ENCODE measurements at regions of chr19 and their contacts with region 1.

Region 1: GRCh38 chr19:35114353-35115176 is 1.1 kb upstream of the FXYD3 start:
- DNase-seq: no peak
- H3K4me3 ChIP-seq: peak overlapping the region; percentile 31 to 46
- H3K27ac ChIP-seq: peak overlapping the region; percentile 94
- H3K4me1 ChIP-seq: peaks cover 21% of the 10 kb centered on the region
- H3K27me3 ChIP-seq: no peaks in the 10 kb centered on the region
- CTCF ChIP-seq: peak; percentile 95 to 97 (median 95)
- POLR2A ChIP-seq: no peak

Region 2: DNA sequence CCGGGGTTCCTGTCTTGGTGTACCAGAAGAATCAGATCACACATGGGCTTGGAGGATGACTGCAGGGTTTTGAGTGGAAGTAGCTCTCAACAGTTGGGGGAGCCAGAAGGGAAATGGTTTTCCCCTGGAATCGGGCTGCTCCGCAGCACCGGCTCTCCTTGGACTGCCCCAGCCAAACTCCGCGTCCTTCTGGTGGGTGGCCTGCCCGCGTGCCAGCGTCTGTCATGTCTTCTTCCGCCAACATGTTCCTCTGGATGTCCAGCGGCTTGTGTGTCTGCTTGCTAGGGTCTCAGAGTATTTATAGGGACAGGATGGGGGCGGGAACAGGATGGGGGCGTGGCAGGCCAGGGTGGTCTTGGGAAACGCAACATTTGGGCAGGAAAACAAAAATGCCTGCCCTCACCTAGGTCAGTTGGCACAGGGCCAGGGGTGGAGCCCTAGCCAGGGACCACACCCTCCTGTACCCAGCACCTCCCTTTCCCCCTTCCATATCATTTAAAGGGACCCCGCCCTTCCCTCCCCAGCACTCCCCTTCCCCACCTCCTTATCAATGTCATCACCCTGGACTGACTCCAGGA is 189.2 kb before region 1 on chr19:
- intact Hi-C with region 1: no loop called
- DNase-seq: no peak
- H3K4me3 ChIP-seq: no peak overlapping the region
- H3K27ac ChIP-seq: no peak overlapping the region
- H3K4me1 ChIP-seq: peaks cover 9% of the 10 kb centered on the region
- H3K27me3 ChIP-seq: no peaks in the 10 kb centered on the region
- CTCF ChIP-seq: no peak
- POLR2A ChIP-seq: no peak

Region 3: DNA sequence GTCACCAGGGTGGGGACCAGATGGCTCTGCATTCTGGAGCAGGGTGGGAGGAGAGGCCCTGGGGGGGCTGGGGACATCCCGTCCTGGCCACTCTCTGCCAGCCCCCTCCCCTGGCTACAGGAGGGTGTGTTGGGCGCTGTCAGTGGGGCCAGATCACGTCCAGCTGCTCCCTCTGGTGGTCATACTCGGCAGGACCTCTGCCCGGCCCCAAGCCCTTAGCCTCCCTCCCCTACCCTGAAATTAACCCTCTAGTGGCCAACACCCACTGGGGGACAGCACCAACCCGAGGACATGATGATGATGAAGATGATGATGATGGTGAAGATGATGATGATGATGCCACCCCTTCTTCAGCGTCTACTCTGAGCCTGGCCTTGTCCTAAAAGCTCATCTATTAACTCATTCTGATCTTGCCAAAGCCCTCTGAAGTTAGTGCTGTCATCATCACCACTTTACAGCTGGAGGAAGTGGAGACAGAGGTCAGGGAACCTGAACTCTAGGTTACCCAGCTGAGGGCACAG is 20.9 kb after region 1 on chr19:
- intact Hi-C with region 1: loop called (anchors 2 kb)
- DNase-seq: no peak
- H3K4me3 ChIP-seq: peak overlapping the region; percentile 41 to 52
- H3K27ac ChIP-seq: peak overlapping the region; percentile 96
- H3K4me1 ChIP-seq: peaks cover 54% of the 10 kb centered on the region
- H3K27me3 ChIP-seq: no peaks in the 10 kb centered on the region
- CTCF ChIP-seq: peak; percentile 91 to 97 (median 91)
- POLR2A ChIP-seq: no peak

Measured in vagina (tissue), 2 donors.